T-cell (primary cell): ENCODE measurements at regions of chr3 and their contacts with region 1.

Region 1: GRCh38 chr3:4898454-4899313 is 80.6 kb upstream of the BHLHE40 start:
- DNase-seq: peak in 1 of 35 experiments; percentile 16
- ATAC-seq: peak in 1 of 4 experiments; percentile 52
- H3K4me3 ChIP-seq: no peak overlapping the region
- H3K4me3 Mint-ChIP-seq: no peak overlapping the region
- H3K27ac ChIP-seq: no peak overlapping the region
- H3K27ac Mint-ChIP-seq: peak overlapping the region; percentile 63 to 71
- H3K4me1 ChIP-seq: peaks cover 0 to 7% of the 10 kb centered on the region in 2 experiments
- H3K4me1 Mint-ChIP-seq: peaks cover 21 to 40% (median 26%) of the 10 kb centered on the region in 3 donors
- H3K27me3 ChIP-seq: no peaks in the 10 kb centered on the region
- H3K27me3 Mint-ChIP-seq: no peaks in the 10 kb centered on the region

Region 2: DNA sequence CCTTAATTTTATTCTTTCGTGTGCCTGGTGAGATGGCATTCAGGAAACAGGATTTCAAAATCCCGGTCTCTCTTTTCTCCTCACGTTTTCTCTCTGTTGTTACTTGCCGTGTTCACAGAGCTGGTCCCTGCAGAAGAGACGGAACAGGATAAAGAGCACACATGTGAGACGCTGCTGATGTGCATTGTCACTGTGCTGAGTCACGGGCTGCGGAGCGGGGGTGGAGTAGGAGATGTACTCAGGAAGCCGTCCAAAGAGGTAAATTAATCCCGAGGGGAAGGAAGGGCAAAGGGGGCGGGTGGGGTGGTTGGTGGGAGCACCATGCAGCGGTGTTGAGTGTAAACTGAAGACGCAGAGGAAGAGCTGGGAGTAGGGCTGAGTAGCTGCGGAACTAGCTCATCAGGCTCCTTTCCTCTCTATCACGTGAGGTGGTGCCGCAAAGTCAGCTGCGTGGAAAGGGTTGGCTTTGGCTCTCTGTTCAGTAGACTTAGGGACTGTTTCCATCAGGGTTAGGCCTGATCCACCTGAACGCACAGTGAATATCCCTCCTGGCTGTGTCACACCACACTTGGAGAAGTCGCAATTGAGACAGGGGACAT is 84.3 kb before region 1 on chr3:
- CTCF ChIA-PET with region 1: no interaction called
- POLR2A ChIA-PET with region 1: no interaction called
- DNase-seq: peak in 1 of 35 experiments; percentile 15
- ATAC-seq: no peak
- H3K4me3 ChIP-seq: no peak overlapping the region
- H3K4me3 Mint-ChIP-seq: no peak overlapping the region
- H3K27ac ChIP-seq: no peak overlapping the region
- H3K27ac Mint-ChIP-seq: peak overlapping the region; percentile 8 to 40
- H3K4me1 ChIP-seq: no peaks in the 10 kb centered on the region
- H3K4me1 Mint-ChIP-seq: peaks cover 0 to 3% (median 0%) of the 10 kb centered on the region in 3 donors
- H3K27me3 ChIP-seq: no peaks in the 10 kb centered on the region
- H3K27me3 Mint-ChIP-seq: no peaks in the 10 kb centered on the region

Region 3: GRCh38 chr3:4834403-4834866 is 64.2 kb before region 1 on chr3:
- CTCF ChIA-PET with region 1: no interaction called
- POLR2A ChIA-PET with region 1: no interaction called
- DNase-seq: peak in 34 of 35 experiments; percentile 44 to 82 (median 64)
- ATAC-seq: peak; percentile 50 to 70 (median 62)
- H3K4me3 ChIP-seq: no peak overlapping the region
- H3K4me3 Mint-ChIP-seq: peak overlapping the region; percentile 5 to 32 (median 18)
- H3K27ac ChIP-seq: peak overlapping the region; percentile 75
- H3K27ac Mint-ChIP-seq: peak overlapping the region; percentile 85 to 90
- H3K4me1 ChIP-seq: peaks cover 44 to 63% of the 10 kb centered on the region in 2 experiments
- H3K4me1 Mint-ChIP-seq: peaks cover 78 to 86% (median 82%) of the 10 kb centered on the region in 3 donors
- H3K27me3 ChIP-seq: no peaks in the 10 kb centered on the region
- H3K27me3 Mint-ChIP-seq: no peaks in the 10 kb centered on the region

Region 4: GRCh38 chr3:4866841-4867240 is 31.8 kb before region 1 on chr3:
- CTCF ChIA-PET with region 1: no interaction called
- POLR2A ChIA-PET with region 1: interaction called in 1 of 2 experiments, 11 read pairs
- DNase-seq: peak in 5 of 35 experiments; percentile 7 to 47 (median 15)
- ATAC-seq: no peak
- H3K4me3 ChIP-seq: no peak overlapping the region
- H3K4me3 Mint-ChIP-seq: peak overlapping the region; percentile 74 to 84 (median 82)
- H3K27ac ChIP-seq: peak overlapping the region; percentile 90
- H3K27ac Mint-ChIP-seq: peak overlapping the region; percentile 94 to 95
- H3K4me1 ChIP-seq: peaks cover 18 to 20% of the 10 kb centered on the region in 2 experiments
- H3K4me1 Mint-ChIP-seq: peaks cover 34 to 47% (median 34%) of the 10 kb centered on the region in 3 donors
- H3K27me3 ChIP-seq: no peaks in the 10 kb centered on the region
- H3K27me3 Mint-ChIP-seq: no peaks in the 10 kb centered on the region